GM12878 (cell line): ENCODE measurements at regions of chr2 and their contacts with region 1.

Region 1: DNA sequence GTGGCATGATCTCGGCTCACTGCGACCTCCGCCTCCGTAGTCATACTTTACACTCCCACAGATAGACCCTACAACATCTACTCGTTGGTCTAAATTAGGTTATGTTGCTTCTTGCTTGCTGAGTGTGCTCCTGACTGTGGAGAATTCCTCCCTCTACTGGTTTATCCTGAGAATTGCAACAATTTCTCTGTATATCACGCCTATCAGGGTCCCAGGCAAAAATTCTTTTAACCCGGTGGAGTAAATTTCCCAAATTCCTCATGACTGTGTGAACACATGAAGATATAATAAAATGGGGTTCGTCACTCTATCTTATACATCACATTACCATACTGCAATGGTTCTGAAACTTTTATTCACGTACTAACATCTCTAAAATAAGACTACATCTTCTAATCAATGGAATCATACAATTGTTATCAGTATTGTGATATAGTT is 156.7 kb downstream of the EVA1A start:
- DNase-seq: peak; percentile 36
- ATAC-seq: peak; percentile 93
- H3K4me3 ChIP-seq: no peak overlapping the region
- H3K27ac ChIP-seq: no peak overlapping the region
- H3K4me1 ChIP-seq: no peaks in the 10 kb centered on the region; the same call in 1 of the 2 replicates
- H3K27me3 ChIP-seq: no peaks in the 10 kb centered on the region
- CTCF ChIP-seq: peak; percentile 73 to 85 (median 80)
- EP300 ChIP-seq: no peak
- POLR2A ChIP-seq: no peak
- RAD21 ChIP-seq: peak; percentile 90

Region 2: GRCh38 chr2:75064691-75065396 is 339.2 kb before region 1 on chr2:
- CTCF ChIA-PET with region 1: interaction called, 20 read pairs
- POLR2A ChIA-PET with region 1: no interaction called
- RAD21 ChIA-PET with region 1: interaction called, 6 read pairs
- SMC1A ChIA-PET with region 1: interaction called, 20 read pairs
- in situ Hi-C with region 1: loop called (anchors 25 kb)
- intact Hi-C with region 1: loop called (anchors 2 kb)
- DNase-seq: no peak
- ATAC-seq: peak; percentile 91
- H3K4me3 ChIP-seq: no peak overlapping the region
- H3K27ac ChIP-seq: no peak overlapping the region
- H3K4me1 ChIP-seq: no peaks in the 10 kb centered on the region
- H3K27me3 ChIP-seq: no peaks in the 10 kb centered on the region
- CTCF ChIP-seq: peak; percentile 67 to 92 (median 89)
- EP300 ChIP-seq: no peak
- POLR2A ChIP-seq: no peak
- RAD21 ChIP-seq: peak; percentile 78

Region 3: GRCh38 chr2:75157430-75157829 is 246.6 kb before region 1 on chr2:
- CTCF ChIA-PET with region 1: interaction called, 5 read pairs
- POLR2A ChIA-PET with region 1: no interaction called
- RAD21 ChIA-PET with region 1: interaction called, 4 read pairs
- SMC1A ChIA-PET with region 1: interaction called, 4 read pairs
- in situ Hi-C with region 1: no loop called
- intact Hi-C with region 1: loop called (anchors 1 kb)
- DNase-seq: no peak
- ATAC-seq: peak; percentile 45; the same call in 2 of the 3 replicates
- H3K4me3 ChIP-seq: no peak overlapping the region
- H3K27ac ChIP-seq: no peak overlapping the region
- H3K4me1 ChIP-seq: no peaks in the 10 kb centered on the region
- H3K27me3 ChIP-seq: no peaks in the 10 kb centered on the region
- CTCF ChIP-seq: peak in 2 of 3 experiments; percentile 15 to 25; a peak in 2 of 6 replicates
- EP300 ChIP-seq: no peak
- POLR2A ChIP-seq: no peak
- RAD21 ChIP-seq: peak; percentile 43; the same call in 1 of the 2 replicates

Region 4: GRCh38 chr2:75311993-75312392 is 92.0 kb before region 1 on chr2:
- CTCF ChIA-PET with region 1: interaction called, 13 read pairs
- POLR2A ChIA-PET with region 1: no interaction called
- RAD21 ChIA-PET with region 1: interaction called, 4 read pairs
- SMC1A ChIA-PET with region 1: interaction called, 12 read pairs
- in situ Hi-C with region 1: no loop called
- intact Hi-C with region 1: loop called (anchors 1 kb)
- DNase-seq: peak; percentile 89
- ATAC-seq: peak; percentile 100
- H3K4me3 ChIP-seq: no peak overlapping the region
- H3K27ac ChIP-seq: no peak overlapping the region
- H3K4me1 ChIP-seq: peaks cover 9% of the 10 kb centered on the region
- H3K27me3 ChIP-seq: no peaks in the 10 kb centered on the region
- CTCF ChIP-seq: peak; percentile 84 to 89 (median 85)
- EP300 ChIP-seq: peak; percentile 28 to 76; a peak in 3 of 4 replicates
- POLR2A ChIP-seq: no peak
- RAD21 ChIP-seq: peak; percentile 79

Region 5: GRCh38 chr2:75342504-75343175 is 61.4 kb before region 1 on chr2:
- CTCF ChIA-PET with region 1: interaction called, 4 read pairs
- POLR2A ChIA-PET with region 1: no interaction called
- RAD21 ChIA-PET with region 1: no interaction called
- SMC1A ChIA-PET with region 1: interaction called, 11 read pairs
- in situ Hi-C with region 1: no loop called
- intact Hi-C with region 1: no loop called
- DNase-seq: peak; percentile 35
- ATAC-seq: peak; percentile 85
- H3K4me3 ChIP-seq: no peak overlapping the region
- H3K27ac ChIP-seq: no peak overlapping the region
- H3K4me1 ChIP-seq: no peaks in the 10 kb centered on the region
- H3K27me3 ChIP-seq: no peaks in the 10 kb centered on the region
- CTCF ChIP-seq: no peak
- EP300 ChIP-seq: no peak
- POLR2A ChIP-seq: no peak
- RAD21 ChIP-seq: no peak

Region 6: GRCh38 chr2:75421991-75422390 is 18.0 kb after region 1 on chr2:
- CTCF ChIA-PET with region 1: interaction called, 235 read pairs
- POLR2A ChIA-PET with region 1: interaction called, 9 read pairs
- RAD21 ChIA-PET with region 1: interaction called, 147 read pairs
- SMC1A ChIA-PET with region 1: interaction called, 211 read pairs
- in situ Hi-C with region 1: no loop called
- intact Hi-C with region 1: no loop called
- DNase-seq: no peak
- ATAC-seq: no peak
- H3K4me3 ChIP-seq: no peak overlapping the region
- H3K27ac ChIP-seq: no peak overlapping the region
- H3K4me1 ChIP-seq: no peaks in the 10 kb centered on the region
- H3K27me3 ChIP-seq: no peaks in the 10 kb centered on the region
- CTCF ChIP-seq: no peak
- EP300 ChIP-seq: no peak
- POLR2A ChIP-seq: no peak
- RAD21 ChIP-seq: no peak

Region 7: GRCh38 chr2:75608684-75609333 is 204.8 kb after region 1 on chr2:
- CTCF ChIA-PET with region 1: interaction called, 6 read pairs
- POLR2A ChIA-PET with region 1: no interaction called
- RAD21 ChIA-PET with region 1: interaction called, 8 read pairs
- SMC1A ChIA-PET with region 1: interaction called, 7 read pairs
- in situ Hi-C with region 1: no loop called
- intact Hi-C with region 1: loop called (anchors 5 kb)
- DNase-seq: no peak
- ATAC-seq: peak; percentile 97
- H3K4me3 ChIP-seq: peak overlapping the region; percentile 49; the same call in 1 of the 2 replicates
- H3K27ac ChIP-seq: no peak overlapping the region
- H3K4me1 ChIP-seq: 0 out of 2 replicates have a peak, but pooled peaks cover 2% of the 10 kb centered on the region
- H3K27me3 ChIP-seq: no peaks in the 10 kb centered on the region
- CTCF ChIP-seq: peak; percentile 96 to 98 (median 98)
- EP300 ChIP-seq: no peak
- POLR2A ChIP-seq: no peak
- RAD21 ChIP-seq: peak; percentile 88